ENCODE measurements at regions of chr16 and their contacts with region 1.

Region 1: DNA sequence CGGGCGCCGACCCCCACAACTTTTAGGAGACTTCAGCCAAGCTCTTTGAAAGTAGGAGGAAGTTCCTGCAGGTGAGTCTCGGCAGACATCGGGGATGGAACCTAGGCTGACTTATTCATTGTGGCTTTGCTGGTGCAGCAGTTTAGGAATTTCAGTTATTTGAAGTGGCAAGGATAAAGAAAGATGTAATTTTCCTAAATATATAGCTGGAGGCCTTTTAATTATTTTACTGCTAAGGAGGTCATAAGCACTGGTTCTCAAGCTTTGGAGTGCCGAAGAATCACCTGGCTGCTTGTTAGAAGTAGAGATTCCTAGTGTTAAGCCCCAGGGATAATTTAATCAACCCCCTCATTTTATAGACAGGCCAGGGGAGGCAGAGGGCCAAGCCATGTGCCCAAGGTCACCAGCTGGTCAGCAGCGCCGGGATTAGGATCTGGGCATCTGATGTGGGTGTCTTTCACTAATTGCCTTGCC is 28.9 kb upstream of the BCAR1 start:
- DNase-seq: no peak
- ATAC-seq: no peak

Region 2: DNA sequence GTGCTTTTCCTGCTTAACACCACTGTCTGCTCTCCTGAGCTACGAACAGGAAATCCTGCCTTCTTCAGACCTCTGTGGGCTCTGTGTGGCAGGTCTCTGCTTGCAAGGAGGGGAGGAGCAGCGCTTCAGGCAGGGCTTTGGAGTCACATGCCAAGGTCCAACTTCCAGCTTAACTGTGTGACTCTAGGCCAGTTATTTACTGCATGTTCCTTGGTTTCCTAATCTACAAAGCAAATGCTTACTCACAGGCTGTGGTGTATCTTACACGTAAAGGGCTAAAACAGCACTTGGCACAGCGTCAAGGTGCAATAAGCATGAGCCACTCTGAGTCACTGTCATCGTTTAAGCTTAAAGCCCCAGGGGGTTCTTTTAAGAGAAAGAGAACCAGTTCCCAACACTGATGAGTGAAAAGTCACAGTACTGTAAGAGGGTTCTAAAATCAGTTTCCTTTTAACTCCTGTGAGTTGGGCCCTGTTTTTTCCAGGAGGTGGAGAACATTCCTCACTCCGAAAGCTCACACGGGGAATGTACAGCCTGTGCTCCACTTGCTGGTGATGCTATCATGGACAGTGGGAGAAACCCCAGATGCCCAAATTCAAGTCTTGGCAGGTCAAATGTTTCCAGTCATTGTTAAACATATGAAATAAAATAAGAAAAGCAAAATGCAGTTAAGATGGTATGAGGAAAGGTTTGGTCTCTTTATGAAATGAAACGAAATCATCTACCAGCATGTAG is 25.2 kb after region 1 on chr16:
- intact Hi-C with region 1: loop called (anchors 1 kb)
- DNase-seq: peak; percentile 64
- ATAC-seq: peak; percentile 83

Measured in sciatic nerve (tissue), 2 donors.